Endothelial cell of umbilical vein (primary cell): ENCODE measurements at regions of chr7 and their contacts with region 1.

Region 1: GRCh38 chr7:816300-816750 is 16.0 kb upstream of the SUN1 start:
- DNase-seq: peak; percentile 95
- H3K4me3 ChIP-seq: peak overlapping the region in 2 of 3 experiments; percentile 18 to 69
- H3K27ac ChIP-seq: no peak overlapping the region
- H3K4me1 ChIP-seq: peaks cover 20% of the 10 kb centered on the region
- H3K27me3 ChIP-seq: no peaks in the 10 kb centered on the region
- CTCF ChIP-seq: no peak
- POLR2A ChIP-seq: peak; percentile 30

Region 2: DNA sequence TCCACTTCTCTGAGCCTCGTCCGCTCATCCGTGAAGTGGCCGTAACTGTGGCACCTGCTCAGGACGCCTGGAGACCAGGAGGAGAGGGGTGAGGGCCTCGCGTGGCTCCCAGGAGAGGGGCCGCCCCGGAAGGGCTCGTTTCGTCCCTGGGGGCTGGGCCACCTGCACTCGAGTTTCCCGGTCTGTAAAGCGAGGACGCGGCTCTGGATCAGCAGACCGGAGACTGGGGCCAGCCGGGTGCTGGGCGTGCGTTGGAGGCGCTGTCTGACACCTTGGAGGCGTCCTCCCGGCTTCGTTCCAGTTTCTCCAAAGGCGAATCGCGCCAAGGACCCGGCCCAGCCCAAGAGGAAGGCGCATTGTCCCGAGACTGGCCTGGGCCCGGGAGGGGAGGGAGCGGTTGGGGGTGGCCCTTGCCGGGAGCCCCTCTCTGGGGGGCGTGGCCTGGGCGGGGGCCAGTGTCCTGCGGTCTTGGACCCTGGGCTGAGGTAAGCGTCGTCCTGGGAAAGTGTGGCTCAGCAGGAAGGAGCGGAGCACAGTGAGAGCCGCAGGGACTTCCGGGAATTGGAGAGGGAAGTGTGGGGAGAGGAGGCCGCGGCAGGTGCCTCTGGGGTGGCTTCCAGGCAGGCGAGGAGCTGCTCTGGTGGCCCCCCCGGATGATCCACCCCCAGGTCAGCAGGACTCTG is 436.7 kb before region 1 on chr7:
- CTCF ChIA-PET with region 1: no interaction called
- POLR2A ChIA-PET with region 1: no interaction called
- dilution Hi-C with region 1: no loop called
- intact Hi-C with region 1: no loop called
- DNase-seq: no peak
- H3K4me3 ChIP-seq: peak overlapping the region in 1 of 3 experiments; percentile 18
- H3K27ac ChIP-seq: no peak overlapping the region
- H3K4me1 ChIP-seq: peaks cover 20% of the 10 kb centered on the region
- H3K27me3 ChIP-seq: peaks cover 0 to 17% of the 10 kb centered on the region in 2 experiments
- CTCF ChIP-seq: no peak
- POLR2A ChIP-seq: no peak

Region 3: GRCh38 chr7:749140-749551 is 67.2 kb before region 1 on chr7:
- CTCF ChIA-PET with region 1: no interaction called
- POLR2A ChIA-PET with region 1: no interaction called
- dilution Hi-C with region 1: no loop called
- intact Hi-C with region 1: no loop called
- DNase-seq: peak; percentile 62
- H3K4me3 ChIP-seq: no peak overlapping the region
- H3K27ac ChIP-seq: no peak overlapping the region
- H3K4me1 ChIP-seq: peaks cover 4% of the 10 kb centered on the region
- H3K27me3 ChIP-seq: no peaks in the 10 kb centered on the region
- CTCF ChIP-seq: no peak
- POLR2A ChIP-seq: no peak

Region 4: GRCh38 chr7:786472-787255 is 29.7 kb before region 1 on chr7:
- CTCF ChIA-PET with region 1: interaction called, 13 read pairs
- POLR2A ChIA-PET with region 1: no interaction called
- dilution Hi-C with region 1: no loop called
- intact Hi-C with region 1: no loop called
- DNase-seq: peak; percentile 57
- H3K4me3 ChIP-seq: no peak overlapping the region
- H3K27ac ChIP-seq: no peak overlapping the region
- H3K4me1 ChIP-seq: no peaks in the 10 kb centered on the region
- H3K27me3 ChIP-seq: no peaks in the 10 kb centered on the region
- CTCF ChIP-seq: peak; percentile 83 to 84
- POLR2A ChIP-seq: no peak

Region 5: GRCh38 chr7:831596-832166 is 15.4 kb after region 1 on chr7:
- CTCF ChIA-PET with region 1: interaction called, 24 read pairs
- POLR2A ChIA-PET with region 1: no interaction called
- dilution Hi-C with region 1: no loop called
- intact Hi-C with region 1: loop called (anchors 1 kb)
- DNase-seq: peak; percentile 93
- H3K4me3 ChIP-seq: peak overlapping the region in 2 of 3 experiments; percentile 12 to 49
- H3K27ac ChIP-seq: peak overlapping the region; percentile 98
- H3K4me1 ChIP-seq: peaks cover 22% of the 10 kb centered on the region
- H3K27me3 ChIP-seq: no peaks in the 10 kb centered on the region
- CTCF ChIP-seq: no peak
- POLR2A ChIP-seq: no peak

Region 6: GRCh38 chr7:836411-837400 is 20.4 kb after region 1 on chr7:
- CTCF ChIA-PET with region 1: interaction called, 24 read pairs
- POLR2A ChIA-PET with region 1: no interaction called
- dilution Hi-C with region 1: no loop called
- intact Hi-C with region 1: loop called (anchors 1 kb)
- DNase-seq: peak; percentile 60
- H3K4me3 ChIP-seq: no peak overlapping the region
- H3K27ac ChIP-seq: no peak overlapping the region
- H3K4me1 ChIP-seq: peaks cover 14% of the 10 kb centered on the region
- H3K27me3 ChIP-seq: no peaks in the 10 kb centered on the region
- CTCF ChIP-seq: peak; percentile 67 to 77
- POLR2A ChIP-seq: no peak

Region 7: DNA sequence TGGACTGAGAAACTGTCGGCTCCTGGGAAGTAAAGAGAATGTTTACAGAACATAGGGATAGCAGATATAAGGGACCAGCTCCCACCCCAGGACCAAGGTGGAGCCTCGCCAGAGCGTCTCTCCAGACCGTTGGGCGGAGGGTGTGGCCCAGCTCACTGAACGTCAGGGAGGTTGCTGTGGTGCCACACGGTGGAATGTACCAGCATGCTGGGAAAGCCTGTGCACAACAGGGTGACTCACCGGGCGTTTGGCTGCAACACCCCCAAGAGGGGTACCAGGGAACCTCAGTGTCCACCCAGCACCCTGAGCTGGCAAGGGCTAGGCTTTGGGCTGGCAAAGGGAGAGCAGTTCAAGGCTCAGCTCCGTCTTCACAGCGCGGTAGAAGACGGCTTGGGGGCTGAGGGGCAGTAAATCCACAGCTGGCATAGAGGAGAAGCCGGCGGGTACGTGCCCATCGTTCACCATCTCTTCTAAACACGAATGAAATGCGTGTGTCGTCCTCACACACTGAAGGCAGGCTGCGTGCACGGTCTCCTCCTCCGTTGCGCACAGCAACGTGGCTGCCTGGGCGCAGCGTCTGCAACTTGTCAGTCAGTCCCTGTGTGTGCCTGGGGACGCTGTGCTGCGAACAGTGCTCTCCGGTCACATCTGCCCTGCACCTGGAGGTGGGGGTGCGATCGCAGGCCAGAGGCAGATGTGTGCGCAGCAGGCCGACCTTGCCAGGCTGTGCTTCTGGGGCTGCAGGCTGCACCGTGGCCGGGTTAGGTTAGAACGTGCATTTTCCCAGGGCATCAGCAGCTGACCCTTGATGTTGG is 51.6 kb after region 1 on chr7:
- CTCF ChIA-PET with region 1: interaction called, 17 read pairs
- POLR2A ChIA-PET with region 1: no interaction called
- dilution Hi-C with region 1: no loop called
- intact Hi-C with region 1: loop called (anchors 2 kb)
- DNase-seq: peak; percentile 69
- H3K4me3 ChIP-seq: no peak overlapping the region
- H3K27ac ChIP-seq: peak overlapping the region; percentile 78
- H3K4me1 ChIP-seq: peaks cover 10% of the 10 kb centered on the region
- H3K27me3 ChIP-seq: no peaks in the 10 kb centered on the region
- CTCF ChIP-seq: no peak
- POLR2A ChIP-seq: no peak